HepG2 (cell line): ENCODE measurements at regions of chr4 and their contacts with region 1.

Region 1: DNA sequence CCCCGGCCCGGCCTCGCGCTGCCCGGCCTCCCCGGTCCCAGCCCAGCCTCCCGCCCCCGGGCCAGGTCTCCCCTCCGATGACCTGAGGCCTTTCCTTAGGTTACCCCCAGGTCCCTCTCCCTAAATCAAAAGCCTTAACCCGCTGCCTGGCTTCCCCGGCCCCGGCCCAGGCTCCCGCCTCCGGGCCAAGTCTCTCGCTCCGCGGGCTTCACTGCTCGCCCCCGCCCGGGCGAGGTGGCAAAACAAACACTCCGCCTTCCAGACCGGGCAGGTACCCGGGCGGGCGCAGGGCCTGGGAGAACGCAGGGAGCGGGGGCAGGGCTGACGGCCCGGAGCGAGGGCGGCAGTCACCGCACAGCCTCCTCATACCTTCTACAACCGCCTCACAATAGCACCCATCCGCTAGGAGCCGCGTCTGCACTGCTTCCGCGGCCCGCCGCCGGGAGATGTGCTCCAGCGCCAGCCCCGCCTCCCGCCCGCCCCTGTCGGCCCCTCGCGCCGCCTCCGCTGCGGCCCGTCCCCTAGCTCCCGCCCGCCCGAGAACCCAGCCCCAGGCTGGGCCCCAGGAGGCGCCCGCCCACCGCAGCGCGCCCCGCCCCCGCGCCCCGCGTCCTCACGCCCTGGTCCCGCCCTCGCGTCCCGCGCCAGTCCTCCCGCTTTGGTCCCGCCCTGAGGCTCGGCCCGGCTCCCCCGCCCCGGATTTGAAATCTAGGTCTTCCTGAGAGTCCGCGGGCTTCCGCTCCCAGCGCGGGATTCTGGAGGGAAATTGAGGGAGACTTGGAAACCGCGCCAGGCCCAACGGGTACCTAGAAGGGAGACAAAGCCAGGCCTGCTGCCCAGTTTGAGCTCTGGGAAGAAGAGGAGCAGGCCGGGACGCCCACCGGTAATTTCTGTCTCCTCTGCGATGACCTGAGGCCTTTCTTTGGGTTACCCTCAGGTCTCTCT is at the starts of genes CASP3 and PRIMPOL:
- DNase-seq: peak; percentile 86
- ATAC-seq: peak; percentile 89
- H3K4me3 ChIP-seq: peak within 1 kb of the TSS; percentile 87 to 92 (median 88)
- H3K27ac ChIP-seq: peak within 1 kb of the TSS; percentile 88
- H3K4me1 ChIP-seq: peaks cover 56% of the 10 kb centered on the region
- H3K27me3 ChIP-seq: no peaks in the 10 kb centered on the region; a peak in 1 of 5 replicates
- CTCF ChIP-seq: peak; percentile 51
- EP300 ChIP-seq: no peak
- POLR2A ChIP-seq: peak; percentile 93 to 98
- RAD21 ChIP-seq: peak; percentile 41
- total RNA-seq, gene CASP3: 77.8 and 139 TPM in 2 replicates
- total RNA-seq, gene PRIMPOL: 11.0 and 17.3 TPM in 2 replicates

Region 2: GRCh38 chr4:184263910-184264732 is 385.2 kb before region 1 on chr4:
- CTCF ChIA-PET with region 1: no interaction called
- POLR2A ChIA-PET with region 1: no interaction called
- in situ Hi-C with region 1: no loop called
- intact Hi-C with region 1: loop called (anchors 10 kb)
- DNase-seq: peak; percentile 87
- ATAC-seq: peak; percentile 84
- H3K4me3 ChIP-seq: no peak overlapping the region
- H3K27ac ChIP-seq: no peak overlapping the region
- H3K4me1 ChIP-seq: peaks cover 34% of the 10 kb centered on the region
- H3K27me3 ChIP-seq: no peaks in the 10 kb centered on the region
- CTCF ChIP-seq: peak; percentile 87
- EP300 ChIP-seq: no peak; a peak in 1 of 4 replicates
- POLR2A ChIP-seq: no peak
- RAD21 ChIP-seq: peak; percentile 87

Region 3: DNA sequence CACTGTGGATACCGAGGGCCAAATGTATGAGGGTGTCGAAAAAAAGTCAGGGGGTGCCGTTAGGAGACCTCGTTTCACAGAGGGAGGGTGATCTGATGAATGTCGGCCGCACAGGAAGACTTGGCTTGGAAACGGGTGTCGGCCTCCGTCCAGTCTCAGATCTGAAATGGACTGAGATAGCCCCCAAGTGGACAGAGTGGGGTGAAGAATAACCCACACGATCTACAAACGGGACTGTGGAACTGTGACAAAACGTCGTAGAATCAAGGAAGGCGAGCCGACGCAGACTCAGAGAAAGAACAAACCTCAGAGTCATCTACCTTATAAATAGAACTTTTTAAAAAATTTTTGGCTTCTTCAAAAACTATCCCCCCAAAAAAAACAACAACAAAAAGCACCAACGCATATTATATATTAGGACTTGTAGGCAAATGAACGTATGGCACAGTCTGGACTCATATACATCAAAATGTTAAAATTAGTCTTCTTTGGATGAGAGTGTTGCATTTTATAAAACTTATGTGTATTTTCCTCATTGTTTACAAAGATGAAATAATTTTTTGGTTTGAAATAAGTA is 111.2 kb before region 1 on chr4:
- CTCF ChIA-PET with region 1: no interaction called
- POLR2A ChIA-PET with region 1: interaction called, 5 read pairs
- in situ Hi-C with region 1: no loop called
- intact Hi-C with region 1: loop called (anchors 5 kb)
- DNase-seq: peak; percentile 85
- ATAC-seq: peak; percentile 92
- H3K4me3 ChIP-seq: peak overlapping the region; percentile 75 to 98 (median 87)
- H3K27ac ChIP-seq: peak overlapping the region; percentile 71
- H3K4me1 ChIP-seq: peaks cover 41% of the 10 kb centered on the region
- H3K27me3 ChIP-seq: no peaks in the 10 kb centered on the region; a peak in 1 of 5 replicates
- CTCF ChIP-seq: peak; percentile 92
- EP300 ChIP-seq: no peak
- POLR2A ChIP-seq: no peak
- RAD21 ChIP-seq: peak; percentile 93

Region 4: DNA sequence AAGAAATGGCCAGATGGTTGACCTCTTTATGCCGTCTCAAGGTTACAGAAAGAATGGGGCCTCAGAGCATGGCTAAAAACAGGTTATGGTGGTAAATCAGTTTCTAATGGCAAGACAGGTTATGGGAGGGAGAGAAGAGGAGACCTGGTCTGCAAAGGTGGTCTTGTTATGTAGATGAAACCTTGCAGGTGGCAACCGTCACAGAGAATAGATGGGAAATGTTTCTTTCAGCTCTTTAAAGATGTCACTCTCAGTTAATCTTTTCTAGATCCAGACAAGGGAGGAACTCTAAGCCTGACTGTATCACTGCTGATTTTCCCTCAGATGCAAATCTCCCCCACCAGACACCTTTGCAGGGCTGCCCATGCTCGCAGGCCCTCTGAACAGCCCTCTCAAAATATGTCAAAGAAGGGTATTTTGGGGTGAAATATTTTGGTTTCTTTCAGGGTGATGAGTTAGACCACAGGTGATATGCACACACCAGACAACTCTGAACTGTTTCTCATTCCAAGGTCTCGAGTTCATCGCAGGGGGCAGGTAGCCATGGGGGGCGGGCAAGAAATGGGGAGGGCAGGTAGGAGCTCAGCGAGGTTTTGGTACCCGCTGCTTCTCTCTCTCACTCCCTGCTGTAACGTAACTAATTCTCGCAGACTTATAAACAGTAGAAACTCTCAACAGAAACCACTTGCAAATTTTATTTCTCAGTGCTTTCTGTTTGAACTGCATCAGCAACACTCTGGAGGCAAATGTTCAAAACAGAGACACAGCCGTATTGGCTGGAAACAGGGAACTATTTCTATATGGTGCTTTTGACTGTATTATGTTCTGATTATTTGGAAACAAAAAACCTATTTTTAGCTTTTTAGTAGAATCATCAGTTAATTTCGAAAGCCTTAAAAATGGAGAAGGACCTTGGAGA is 32.4 kb before region 1 on chr4:
- CTCF ChIA-PET with region 1: no interaction called
- POLR2A ChIA-PET with region 1: interaction called, 10 read pairs
- in situ Hi-C with region 1: no loop called
- intact Hi-C with region 1: no loop called
- DNase-seq: no peak
- ATAC-seq: no peak
- H3K4me3 ChIP-seq: no peak overlapping the region
- H3K27ac ChIP-seq: no peak overlapping the region
- H3K4me1 ChIP-seq: peaks cover 48% of the 10 kb centered on the region
- H3K27me3 ChIP-seq: no peaks in the 10 kb centered on the region
- CTCF ChIP-seq: no peak
- EP300 ChIP-seq: no peak
- POLR2A ChIP-seq: no peak
- RAD21 ChIP-seq: no peak

Region 5: GRCh38 chr4:184627765-184628480 is 21.4 kb before region 1 on chr4:
- CTCF ChIA-PET with region 1: no interaction called
- POLR2A ChIA-PET with region 1: interaction called, 48 read pairs
- in situ Hi-C with region 1: no loop called
- intact Hi-C with region 1: loop called (anchors 2 kb)
- DNase-seq: no peak
- ATAC-seq: no peak
- H3K4me3 ChIP-seq: no peak overlapping the region
- H3K27ac ChIP-seq: peak overlapping the region; percentile 4
- H3K4me1 ChIP-seq: peaks cover 49% of the 10 kb centered on the region
- H3K27me3 ChIP-seq: no peaks in the 10 kb centered on the region
- CTCF ChIP-seq: no peak
- EP300 ChIP-seq: no peak
- POLR2A ChIP-seq: no peak
- RAD21 ChIP-seq: no peak

Region 6: GRCh38 chr4:184635381-184635780 is 13.9 kb before region 1 on chr4:
- CTCF ChIA-PET with region 1: no interaction called
- POLR2A ChIA-PET with region 1: interaction called, 10 read pairs
- in situ Hi-C with region 1: no loop called
- intact Hi-C with region 1: no loop called
- DNase-seq: no peak
- ATAC-seq: no peak
- H3K4me3 ChIP-seq: no peak overlapping the region
- H3K27ac ChIP-seq: no peak overlapping the region
- H3K4me1 ChIP-seq: peaks cover 26% of the 10 kb centered on the region
- H3K27me3 ChIP-seq: no peaks in the 10 kb centered on the region
- CTCF ChIP-seq: no peak
- EP300 ChIP-seq: 0 out of 4 replicates have a peak, but pooled peaks of 1 of the 2 experiments have one; percentile 9
- POLR2A ChIP-seq: no peak
- RAD21 ChIP-seq: no peak

Region 7: GRCh38 chr4:184733654-184734524 is 84.6 kb after region 1 on chr4 and contains the start of gene CENPU:
- CTCF ChIA-PET with region 1: no interaction called
- POLR2A ChIA-PET with region 1: interaction called, 12 read pairs
- in situ Hi-C with region 1: no loop called
- intact Hi-C with region 1: no loop called
- DNase-seq: peak; percentile 97
- ATAC-seq: peak; percentile 94
- H3K4me3 ChIP-seq: peak within 1 kb of the TSS; percentile 73 to 92 (median 88)
- H3K27ac ChIP-seq: peak within 1 kb of the TSS; percentile 80
- H3K4me1 ChIP-seq: peaks cover 51% of the 10 kb centered on the region
- H3K27me3 ChIP-seq: no peaks in the 10 kb centered on the region
- CTCF ChIP-seq: no peak
- EP300 ChIP-seq: peak; percentile 66 to 67; a peak in 2 of 4 replicates
- POLR2A ChIP-seq: peak; percentile 70 to 80
- RAD21 ChIP-seq: peak; percentile 71
- total RNA-seq, gene CENPU: 35.8 and 39.5 TPM in 2 replicates

Region 8: DNA sequence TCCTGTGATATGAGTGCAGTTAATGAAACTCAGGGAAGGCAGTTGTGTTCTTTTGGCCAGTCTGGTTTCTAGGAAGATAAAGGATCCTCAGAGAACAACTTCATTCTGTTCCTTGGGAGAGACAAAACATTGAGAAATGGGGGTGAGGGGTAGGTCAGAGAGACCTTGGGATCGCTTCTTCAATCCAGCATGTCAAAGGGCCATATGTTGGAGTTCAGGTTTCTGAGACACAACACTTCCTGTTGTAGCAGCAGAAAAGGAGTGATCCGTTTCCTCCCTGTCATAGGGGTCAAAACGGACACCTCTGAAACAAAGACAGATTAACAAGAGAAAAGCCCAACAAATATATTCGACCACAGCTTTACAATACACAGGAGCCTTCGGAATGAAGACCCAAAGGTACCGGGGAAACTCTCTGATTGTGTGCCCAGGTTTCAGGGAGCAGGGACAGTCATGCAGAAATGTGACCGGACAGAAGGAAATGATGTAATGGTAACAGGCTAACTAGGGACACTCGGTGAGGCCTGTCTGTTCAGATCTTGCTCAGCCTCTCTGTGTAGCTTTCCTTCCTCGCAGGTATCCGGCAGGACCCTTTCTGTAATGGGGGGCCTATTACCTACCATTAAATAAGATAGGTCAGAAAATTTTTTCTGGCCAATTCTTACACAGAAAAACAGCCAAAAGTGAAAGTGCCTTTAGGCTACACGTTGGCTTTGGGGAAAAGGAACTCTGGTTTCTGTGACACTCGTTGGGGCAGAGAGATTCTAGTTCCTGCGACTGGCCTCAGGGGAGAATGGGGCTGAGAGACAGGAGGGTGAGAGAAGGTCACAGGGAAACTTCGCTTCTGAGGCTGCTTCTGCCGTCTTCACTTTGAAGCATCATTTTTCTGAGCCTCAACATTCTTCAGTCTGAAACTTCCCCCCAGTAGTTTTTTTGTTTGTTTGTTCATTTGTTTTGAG is 1316.4 kb after region 1 on chr4:
- CTCF ChIA-PET with region 1: no interaction called
- POLR2A ChIA-PET with region 1: no interaction called
- in situ Hi-C with region 1: no loop called
- intact Hi-C with region 1: no loop called
- DNase-seq: no peak
- ATAC-seq: no peak
- H3K4me3 ChIP-seq: no peak overlapping the region
- H3K27ac ChIP-seq: no peak overlapping the region
- H3K4me1 ChIP-seq: peaks cover 25% of the 10 kb centered on the region
- H3K27me3 ChIP-seq: no peaks in the 10 kb centered on the region
- CTCF ChIP-seq: no peak
- EP300 ChIP-seq: no peak
- POLR2A ChIP-seq: no peak
- RAD21 ChIP-seq: no peak